Ascending aorta (tissue), 2 donors: ENCODE measurements at regions of chr1 and their contacts with region 1.

Region 1: DNA sequence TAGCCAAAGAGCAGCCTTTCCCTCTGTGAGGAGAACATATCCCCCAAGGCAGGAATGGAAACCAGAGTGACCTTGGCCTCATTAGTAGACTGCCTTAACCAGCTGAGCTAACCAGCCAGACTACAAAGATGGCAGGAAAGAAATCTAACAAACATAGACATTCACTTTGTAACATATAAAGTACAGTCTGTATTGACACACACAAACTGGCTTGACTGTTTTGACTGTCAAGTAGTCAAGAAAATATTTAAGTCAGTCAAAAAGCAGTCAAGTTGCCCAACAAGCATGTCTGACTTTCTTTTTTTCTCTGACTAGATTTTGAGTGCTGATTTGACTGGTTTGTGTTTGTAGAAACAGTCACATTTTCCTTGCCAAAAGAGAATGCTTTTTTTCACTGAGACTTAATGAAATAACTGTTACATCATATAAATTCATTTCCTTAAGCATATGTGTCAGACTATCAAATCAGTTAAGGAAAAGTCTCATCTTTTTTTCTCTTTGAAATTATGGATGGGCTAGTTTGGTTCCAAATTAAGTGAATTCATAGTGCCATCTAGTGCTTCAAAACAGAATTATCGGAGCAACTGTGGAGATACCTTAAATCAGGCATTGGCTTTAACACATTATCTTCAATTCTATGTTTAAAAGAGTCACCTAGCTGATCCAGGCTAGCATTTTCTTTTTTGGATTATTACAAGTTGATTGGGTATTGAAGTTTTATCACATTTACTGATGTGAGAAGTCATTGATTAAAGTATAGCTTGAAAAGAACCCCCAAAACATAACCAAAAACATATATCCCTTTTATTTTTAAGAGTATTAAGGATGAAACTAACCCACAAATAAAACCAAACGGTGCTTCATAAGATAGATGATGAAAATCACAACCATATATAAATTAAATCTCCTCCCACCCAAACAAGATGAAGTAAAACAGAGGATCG is 75.0 kb downstream of the ATP6V1G3 start:
- DNase-seq: no peak
- H3K4me3 ChIP-seq: no peak overlapping the region
- H3K27ac ChIP-seq: no peak overlapping the region
- H3K4me1 ChIP-seq: no peaks in the 10 kb centered on the region
- H3K27me3 ChIP-seq: no peaks in the 10 kb centered on the region
- CTCF ChIP-seq: peak; percentile 31 to 60 (median 49)

Region 2: DNA sequence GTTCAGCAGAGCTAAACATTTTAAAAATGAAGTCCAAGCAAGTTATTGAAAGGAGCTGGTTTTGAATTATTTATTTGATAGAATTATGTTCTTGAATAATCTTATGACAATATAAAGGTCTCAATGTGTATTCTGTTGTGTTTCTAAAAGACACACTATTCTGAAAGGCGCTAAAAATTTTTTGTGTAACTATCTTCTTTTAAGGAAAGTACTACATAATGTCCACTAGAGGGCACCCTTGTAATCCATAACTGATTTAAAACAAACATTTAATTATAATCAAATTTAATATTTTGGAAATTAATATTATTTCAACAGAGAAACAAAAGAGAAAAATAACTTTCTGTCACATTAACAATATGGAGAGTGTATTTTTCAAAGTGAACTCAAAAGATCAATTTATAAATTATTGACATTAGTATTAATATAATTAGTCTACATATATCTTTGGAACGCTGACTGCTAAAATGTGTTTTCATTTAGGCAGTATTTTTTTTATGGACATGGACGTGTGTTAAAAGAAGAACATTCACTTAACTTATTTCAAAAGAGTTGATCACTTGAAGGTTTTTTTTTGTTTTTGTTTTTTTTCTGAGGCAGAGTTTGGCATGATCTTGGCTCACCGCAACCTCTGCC is 938.6 kb before region 1 on chr1:
- intact Hi-C with region 1: loop called (anchors 5 kb)
- DNase-seq: no peak
- H3K4me3 ChIP-seq: no peak overlapping the region
- H3K27ac ChIP-seq: no peak overlapping the region
- H3K4me1 ChIP-seq: no peaks in the 10 kb centered on the region
- H3K27me3 ChIP-seq: no peaks in the 10 kb centered on the region
- CTCF ChIP-seq: peak; percentile 25 to 69 (median 66)

Region 3: DNA sequence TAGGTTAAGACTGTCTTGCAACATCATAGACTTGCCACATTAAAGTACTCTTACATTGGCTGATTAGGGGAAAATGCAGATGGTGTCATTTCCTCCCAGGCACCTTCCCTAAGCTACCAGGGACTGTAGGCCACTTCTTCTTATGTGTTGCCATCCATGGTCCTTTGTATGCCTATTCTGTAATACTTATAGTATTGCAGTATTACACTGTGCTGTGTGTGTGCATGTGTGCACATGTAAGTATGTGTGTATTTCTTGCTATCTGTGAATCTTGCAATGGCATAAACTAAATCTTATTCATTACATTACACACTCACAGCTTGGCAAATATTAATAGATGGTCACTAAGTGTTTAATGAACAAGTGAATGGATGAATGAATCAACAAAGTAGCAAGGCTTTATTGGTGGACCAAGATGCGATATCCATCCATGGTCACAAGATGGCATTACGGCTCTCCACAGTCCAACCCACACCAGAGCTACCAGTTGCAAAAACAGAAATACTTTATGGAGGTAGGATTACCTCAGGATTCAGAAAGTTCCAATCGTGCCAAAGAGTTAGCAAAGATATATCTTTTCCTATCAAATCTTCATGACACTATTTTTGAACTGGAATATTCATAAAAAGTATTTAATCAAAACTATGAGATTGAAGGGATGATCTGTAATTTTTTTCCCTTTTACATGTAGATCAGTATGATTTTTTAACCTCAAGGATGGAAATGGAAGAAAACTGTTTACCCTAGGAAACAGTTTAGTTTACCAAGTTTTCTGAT is 850.4 kb before region 1 on chr1:
- intact Hi-C with region 1: loop called (anchors 2 kb)
- DNase-seq: no peak
- H3K4me3 ChIP-seq: no peak overlapping the region
- H3K27ac ChIP-seq: no peak overlapping the region
- H3K4me1 ChIP-seq: no peaks in the 10 kb centered on the region
- H3K27me3 ChIP-seq: no peaks in the 10 kb centered on the region
- CTCF ChIP-seq: peak in 1 of 3 experiments; percentile 48

Region 4: DNA sequence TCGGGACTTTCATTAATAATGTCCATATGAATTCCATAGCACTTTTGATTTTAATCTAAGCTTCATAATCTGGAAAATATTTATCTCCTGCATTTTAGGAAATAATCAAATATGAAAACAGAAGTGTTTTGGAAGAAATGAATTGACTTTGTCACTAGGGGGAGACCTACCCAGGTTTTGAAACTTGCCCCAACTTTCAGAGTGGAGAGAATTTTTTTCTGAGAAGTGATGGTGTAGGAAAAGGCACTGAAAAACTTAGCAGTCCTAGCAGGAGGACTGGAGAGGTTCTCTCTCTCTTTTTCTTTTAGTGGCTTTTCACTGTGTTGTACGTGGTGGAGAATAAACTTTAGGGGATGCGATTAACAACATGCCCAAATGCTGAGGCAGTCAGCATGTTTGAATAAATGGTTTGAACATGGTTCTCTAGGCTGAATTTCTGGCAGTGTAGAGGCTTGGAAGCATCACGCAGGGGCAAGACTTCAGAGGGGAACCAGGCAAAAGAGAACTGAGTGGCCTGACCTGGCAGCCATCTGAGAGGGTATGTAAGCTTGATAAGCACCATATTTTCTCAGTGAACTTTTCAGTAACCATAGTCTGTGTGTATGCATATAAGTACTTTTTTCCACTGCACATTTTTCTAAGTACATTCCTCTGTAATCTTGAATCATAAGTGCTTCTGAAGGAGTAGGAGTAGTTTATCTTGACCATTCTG is 377.0 kb before region 1 on chr1:
- intact Hi-C with region 1: loop called (anchors 5 kb)
- DNase-seq: no peak
- H3K4me3 ChIP-seq: no peak overlapping the region
- H3K27ac ChIP-seq: no peak overlapping the region
- H3K4me1 ChIP-seq: peaks cover 0 to 2% of the 10 kb centered on the region in 2 donors
- H3K27me3 ChIP-seq: no peaks in the 10 kb centered on the region
- CTCF ChIP-seq: peak; percentile 38 to 74 (median 45)

Region 5: DNA sequence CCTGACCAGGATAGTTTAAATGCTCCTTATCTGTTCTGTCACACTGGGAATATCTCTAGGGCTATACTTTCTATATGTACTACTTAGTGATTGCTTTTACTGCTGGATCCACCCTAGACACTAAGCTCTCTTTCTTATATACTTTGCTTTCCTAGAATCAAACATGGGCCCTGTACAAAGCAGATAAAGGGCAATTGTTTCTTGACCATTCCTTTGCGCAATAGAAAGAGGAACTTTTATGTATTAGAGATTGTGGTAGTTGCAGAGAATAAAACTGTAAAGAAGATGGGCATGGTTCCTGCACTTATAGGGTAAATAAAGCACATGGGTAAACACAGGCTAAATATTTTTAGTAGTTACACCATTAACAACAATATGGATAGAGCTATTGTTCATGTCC is 16.2 kb after region 1 on chr1:
- intact Hi-C with region 1: no loop called
- DNase-seq: no peak
- H3K4me3 ChIP-seq: no peak overlapping the region
- H3K27ac ChIP-seq: no peak overlapping the region
- H3K4me1 ChIP-seq: no peaks in the 10 kb centered on the region
- H3K27me3 ChIP-seq: no peaks in the 10 kb centered on the region
- CTCF ChIP-seq: no peak

Region 6: GRCh38 chr1:198598796-198599321 is 133.4 kb after region 1 on chr1:
- intact Hi-C with region 1: no loop called
- DNase-seq: no peak
- H3K4me3 ChIP-seq: no peak overlapping the region
- H3K27ac ChIP-seq: no peak overlapping the region
- H3K4me1 ChIP-seq: no peaks in the 10 kb centered on the region
- H3K27me3 ChIP-seq: no peaks in the 10 kb centered on the region
- CTCF ChIP-seq: no peak